Endothelial cell of umbilical vein (primary cell): ENCODE measurements at regions of chr7 and their contacts with region 1.

Region 1: DNA sequence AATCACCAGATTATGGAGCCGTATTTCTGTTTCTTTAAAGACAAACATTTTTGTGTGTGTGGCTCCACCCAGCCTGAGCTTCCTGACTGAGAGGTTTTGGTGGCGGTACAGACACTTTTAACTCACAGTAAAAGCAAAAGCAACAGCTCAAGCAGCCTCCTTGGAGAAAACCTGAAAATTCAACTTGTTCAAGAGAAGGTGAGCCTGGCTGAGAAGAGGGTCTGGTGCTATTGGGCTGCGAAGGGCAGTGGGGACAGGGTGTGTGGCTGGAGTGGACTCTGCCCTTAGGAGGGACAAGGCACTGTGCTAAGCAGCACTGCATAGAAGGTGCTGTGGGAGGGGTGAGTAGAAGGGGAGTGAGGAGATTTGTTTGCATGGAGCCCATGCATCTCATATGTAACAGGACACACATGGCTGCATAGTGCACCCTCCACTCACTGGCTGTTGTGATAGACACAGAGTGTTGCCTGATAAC is at the start of gene GIMAP7:
- DNase-seq: peak; percentile 81
- H3K4me3 ChIP-seq: peak within 1 kb of the TSS; percentile 69 to 92 (median 91)
- H3K27ac ChIP-seq: peak within 1 kb of the TSS; percentile 61
- H3K4me1 ChIP-seq: peaks cover 21% of the 10 kb centered on the region
- H3K27me3 ChIP-seq: no peaks in the 10 kb centered on the region
- CTCF ChIP-seq: no peak
- POLR2A ChIP-seq: peak; percentile 81
- total RNA-seq, gene GIMAP7: 42.4 and 51.1 TPM in 2 replicates

Region 2: DNA sequence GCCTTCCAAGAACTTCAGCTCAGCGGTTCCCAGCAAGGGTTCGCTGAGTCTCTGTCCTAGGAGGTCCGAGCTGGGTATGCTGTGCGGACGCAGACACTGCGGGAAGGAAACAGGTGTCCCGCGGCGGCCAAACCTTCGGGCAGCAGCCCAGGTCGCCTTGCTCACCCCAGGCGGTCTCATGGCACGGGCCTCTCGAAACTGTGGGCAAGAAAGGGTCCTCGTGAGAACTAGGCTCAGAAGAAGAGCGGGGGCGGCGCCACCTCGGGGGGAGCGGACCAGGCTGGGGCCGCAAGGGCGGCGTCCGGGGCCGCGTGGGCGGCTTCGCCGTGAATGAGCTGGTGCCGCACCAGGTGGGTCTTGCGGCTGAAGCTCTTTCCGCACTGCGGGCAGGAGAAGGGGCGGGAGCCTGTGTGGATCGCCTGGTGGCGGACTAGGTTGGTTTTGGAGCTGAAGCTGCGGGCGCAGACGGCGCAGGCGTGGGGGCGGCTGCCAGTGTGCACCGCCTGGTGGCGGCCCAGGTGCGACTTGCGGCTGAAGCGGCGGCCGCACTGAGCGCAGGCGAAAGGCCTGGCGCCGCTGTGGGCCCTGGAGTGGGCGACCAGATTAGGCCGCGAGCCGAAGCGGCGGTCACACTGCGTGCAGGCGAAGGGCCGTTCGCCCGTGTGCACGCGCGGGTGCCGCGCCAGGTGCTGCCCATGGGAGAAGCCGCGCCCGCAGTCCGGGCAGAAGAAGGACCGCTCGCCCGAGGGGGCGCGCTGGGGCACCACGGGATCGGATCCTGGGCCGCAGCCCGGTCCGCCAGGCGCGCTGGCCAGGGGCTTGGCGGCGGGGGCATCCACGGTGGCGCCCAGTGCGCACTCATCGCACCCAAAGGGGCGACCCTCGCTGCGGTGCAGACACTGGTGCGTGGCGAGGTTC is 750.0 kb before region 1 on chr7:
- CTCF ChIA-PET with region 1: no interaction called
- POLR2A ChIA-PET with region 1: no interaction called
- dilution Hi-C with region 1: no loop called
- intact Hi-C with region 1: no loop called
- DNase-seq: no peak
- H3K4me3 ChIP-seq: no peak overlapping the region
- H3K27ac ChIP-seq: no peak overlapping the region
- H3K4me1 ChIP-seq: no peaks in the 10 kb centered on the region
- H3K27me3 ChIP-seq: peaks cover 0 to 1% of the 10 kb centered on the region in 2 experiments
- CTCF ChIP-seq: no peak
- POLR2A ChIP-seq: no peak

Region 3: DNA sequence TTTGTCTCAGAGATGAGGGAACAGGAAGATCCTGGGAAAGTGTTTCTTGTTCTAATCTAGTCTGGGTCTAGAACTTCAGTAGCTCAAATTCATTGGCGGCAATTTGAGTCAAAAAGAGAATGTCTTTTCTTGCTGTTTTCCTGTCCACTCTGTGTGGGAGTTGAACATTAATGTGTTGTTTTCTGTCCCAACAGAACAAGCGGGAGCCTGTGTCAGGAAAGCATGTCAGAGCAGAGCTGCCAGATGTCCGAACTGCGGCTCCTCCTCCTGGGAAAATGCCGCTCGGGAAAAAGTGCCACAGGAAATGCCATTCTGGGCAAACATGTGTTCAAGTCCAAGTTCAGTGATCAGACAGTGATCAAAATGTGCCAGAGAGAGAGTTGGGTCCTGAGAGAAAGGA is 48.3 kb before region 1 on chr7:
- CTCF ChIA-PET with region 1: no interaction called
- POLR2A ChIA-PET with region 1: interaction called, 5 read pairs
- dilution Hi-C with region 1: no loop called
- intact Hi-C with region 1: loop called (anchors 5 kb)
- DNase-seq: peak; percentile 93
- H3K4me3 ChIP-seq: peak overlapping the region in 2 of 3 experiments; percentile 30 to 77
- H3K27ac ChIP-seq: peak overlapping the region; percentile 53
- H3K4me1 ChIP-seq: peaks cover 22% of the 10 kb centered on the region
- H3K27me3 ChIP-seq: no peaks in the 10 kb centered on the region
- CTCF ChIP-seq: no peak
- POLR2A ChIP-seq: no peak

Region 4: GRCh38 chr7:150567169-150567568 is 52.4 kb after region 1 on chr7 and contains the start of gene GIMAP4:
- CTCF ChIA-PET with region 1: interaction called, 3 read pairs
- POLR2A ChIA-PET with region 1: interaction called, 4 read pairs
- dilution Hi-C with region 1: no loop called
- intact Hi-C with region 1: loop called (anchors 1 kb)
- DNase-seq: peak; percentile 69
- H3K4me3 ChIP-seq: peak within 1 kb of the TSS; percentile 78 to 80 (median 79)
- H3K27ac ChIP-seq: peak within 1 kb of the TSS; percentile 63
- H3K4me1 ChIP-seq: peaks cover 62% of the 10 kb centered on the region
- H3K27me3 ChIP-seq: no peaks in the 10 kb centered on the region
- CTCF ChIP-seq: no peak
- POLR2A ChIP-seq: peak; percentile 49
- total RNA-seq, gene GIMAP4: 168 and 174 TPM in 2 replicates

Region 5: DNA sequence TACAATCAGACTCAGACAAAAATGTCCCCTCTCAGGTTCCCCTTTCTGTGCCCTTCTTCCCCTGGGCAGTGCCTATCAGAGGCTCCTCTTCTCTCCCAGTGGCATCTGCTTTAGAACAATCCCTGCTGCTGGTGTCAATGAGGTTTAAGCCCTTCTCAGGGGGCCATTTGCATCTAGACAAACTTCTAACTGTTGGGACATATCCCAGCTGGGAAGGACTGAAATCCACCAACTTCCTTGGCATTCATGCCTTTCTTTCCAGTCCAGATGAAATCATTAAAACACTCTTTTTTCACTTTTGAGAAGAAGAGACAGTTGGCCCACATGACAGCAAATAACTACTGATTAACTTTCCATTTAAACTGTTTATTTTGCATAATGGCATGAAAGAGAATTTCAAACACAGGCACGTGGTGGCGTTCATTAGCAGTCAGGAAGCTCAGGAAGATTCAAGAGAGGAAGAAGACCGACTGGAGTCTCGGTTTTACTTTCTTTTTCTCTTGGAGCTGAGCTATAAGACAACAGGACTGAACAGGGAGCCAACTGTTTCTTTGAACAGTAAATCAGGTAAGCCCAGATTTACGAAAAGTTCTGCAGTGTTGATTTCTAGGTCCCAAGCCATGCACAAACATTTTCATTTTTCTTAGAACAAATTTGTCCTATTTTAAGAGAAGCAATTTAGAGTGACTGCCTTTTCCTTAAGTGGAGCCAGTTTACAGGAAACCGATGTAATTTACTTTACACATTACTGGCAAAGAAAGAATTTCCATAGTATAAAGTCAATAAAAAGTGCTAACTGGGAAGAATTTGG is 170.6 kb after region 1 on chr7 and contains the start of gene GIMAP2:
- CTCF ChIA-PET with region 1: no interaction called
- POLR2A ChIA-PET with region 1: no interaction called
- dilution Hi-C with region 1: no loop called
- intact Hi-C with region 1: loop called (anchors 5 kb)
- DNase-seq: peak; percentile 87
- H3K4me3 ChIP-seq: peak within 1 kb of the TSS; percentile 22 to 93 (median 90)
- H3K27ac ChIP-seq: peak within 1 kb of the TSS; percentile 83
- H3K4me1 ChIP-seq: peaks cover 15% of the 10 kb centered on the region
- H3K27me3 ChIP-seq: no peaks in the 10 kb centered on the region
- CTCF ChIP-seq: no peak
- POLR2A ChIP-seq: no peak
- total RNA-seq, gene GIMAP2: 26.2 and 27.9 TPM in 2 replicates

Region 6: DNA sequence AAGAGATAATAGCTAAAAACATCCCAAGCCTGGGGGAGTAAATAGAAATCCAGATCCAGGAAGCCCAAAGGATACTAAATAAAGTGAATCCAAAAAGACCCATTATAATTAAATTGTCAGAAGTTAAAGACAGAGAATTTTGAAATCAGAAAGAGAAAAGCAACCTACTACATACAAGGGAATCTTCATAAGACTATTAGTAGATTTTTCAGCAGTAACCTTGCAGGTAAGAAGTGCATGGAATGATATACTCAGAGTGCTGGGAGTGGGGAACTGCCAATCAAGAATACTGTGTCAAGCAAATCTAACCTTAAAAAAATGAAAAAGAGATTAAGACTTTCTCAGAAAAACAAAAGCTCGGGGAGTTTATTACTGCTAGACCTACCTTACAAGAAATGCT is 188.4 kb after region 1 on chr7:
- CTCF ChIA-PET with region 1: no interaction called
- POLR2A ChIA-PET with region 1: no interaction called
- dilution Hi-C with region 1: no loop called
- intact Hi-C with region 1: no loop called
- DNase-seq: no peak
- H3K4me3 ChIP-seq: no peak overlapping the region
- H3K27ac ChIP-seq: no peak overlapping the region
- H3K4me1 ChIP-seq: no peaks in the 10 kb centered on the region
- H3K27me3 ChIP-seq: no peaks in the 10 kb centered on the region
- CTCF ChIP-seq: no peak
- POLR2A ChIP-seq: no peak

Region 7: DNA sequence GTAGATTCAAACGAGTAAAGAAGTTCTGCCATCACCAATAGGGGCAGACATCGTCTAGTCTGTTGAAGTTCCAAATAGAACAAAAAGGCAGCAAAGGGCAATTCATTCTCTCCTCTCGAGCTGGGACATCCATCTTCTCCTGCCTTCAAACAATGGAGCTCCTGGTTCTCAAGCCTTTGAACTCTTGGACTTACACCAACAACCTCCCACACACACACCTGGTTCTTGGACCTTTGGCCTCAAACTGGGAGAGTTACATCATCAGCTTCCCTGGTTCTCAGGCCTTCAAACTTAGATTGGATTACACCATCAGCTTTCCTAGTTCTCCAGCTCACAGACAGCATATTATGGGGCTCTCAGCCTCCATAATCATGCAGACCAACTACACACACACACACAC is 212.6 kb after region 1 on chr7:
- CTCF ChIA-PET with region 1: no interaction called
- POLR2A ChIA-PET with region 1: no interaction called
- dilution Hi-C with region 1: no loop called
- intact Hi-C with region 1: no loop called
- DNase-seq: no peak
- H3K4me3 ChIP-seq: no peak overlapping the region
- H3K27ac ChIP-seq: no peak overlapping the region
- H3K4me1 ChIP-seq: peaks cover under 1% of the 10 kb centered on the region
- H3K27me3 ChIP-seq: no peaks in the 10 kb centered on the region
- CTCF ChIP-seq: no peak
- POLR2A ChIP-seq: no peak

Region 8: GRCh38 chr7:150737265-150738055 is 222.7 kb after region 1 on chr7 and contains the start of gene GIMAP5:
- CTCF ChIA-PET with region 1: no interaction called
- POLR2A ChIA-PET with region 1: no interaction called
- dilution Hi-C with region 1: no loop called
- intact Hi-C with region 1: loop called (anchors 5 kb)
- DNase-seq: peak; percentile 48
- H3K4me3 ChIP-seq: peak within 1 kb of the TSS in 2 of 3 experiments; percentile 32 to 46
- H3K27ac ChIP-seq: no peak within 1 kb of the TSS
- H3K4me1 ChIP-seq: peaks cover 27% of the 10 kb centered on the region
- H3K27me3 ChIP-seq: no peaks in the 10 kb centered on the region
- CTCF ChIP-seq: no peak
- POLR2A ChIP-seq: no peak
- total RNA-seq, gene GIMAP5: 0.44 and 0.85 TPM in 2 replicates